Heart left ventricle (tissue), 16 donors: ENCODE measurements at regions of chr20 and their contacts with region 1.

Region 1: GRCh38 chr20:34302723-34303528 is at the start of gene AHCY:
- DNase-seq: peak; percentile 95 to 98 (median 97)
- ATAC-seq: peak; percentile 92 to 98 (median 97)
- H3K4me3 ChIP-seq: peak within 1 kb of the TSS; percentile 58 to 95 (median 74)
- H3K27ac ChIP-seq: peak within 1 kb of the TSS; percentile 70 to 98 (median 92)
- H3K4me1 ChIP-seq: peaks cover 0 to 34% (median 16%) of the 10 kb centered on the region in 12 donors
- H3K27me3 ChIP-seq: no peaks in the 10 kb centered on the region
- CTCF ChIP-seq: peak in 2 of 12 donors; percentile 12 to 19
- POLR2A ChIP-seq: peak in 1 of 2 donors; percentile 77
- total RNA-seq, gene AHCY: 48.3 to 132 (median 57.2) TPM

Region 2: DNA sequence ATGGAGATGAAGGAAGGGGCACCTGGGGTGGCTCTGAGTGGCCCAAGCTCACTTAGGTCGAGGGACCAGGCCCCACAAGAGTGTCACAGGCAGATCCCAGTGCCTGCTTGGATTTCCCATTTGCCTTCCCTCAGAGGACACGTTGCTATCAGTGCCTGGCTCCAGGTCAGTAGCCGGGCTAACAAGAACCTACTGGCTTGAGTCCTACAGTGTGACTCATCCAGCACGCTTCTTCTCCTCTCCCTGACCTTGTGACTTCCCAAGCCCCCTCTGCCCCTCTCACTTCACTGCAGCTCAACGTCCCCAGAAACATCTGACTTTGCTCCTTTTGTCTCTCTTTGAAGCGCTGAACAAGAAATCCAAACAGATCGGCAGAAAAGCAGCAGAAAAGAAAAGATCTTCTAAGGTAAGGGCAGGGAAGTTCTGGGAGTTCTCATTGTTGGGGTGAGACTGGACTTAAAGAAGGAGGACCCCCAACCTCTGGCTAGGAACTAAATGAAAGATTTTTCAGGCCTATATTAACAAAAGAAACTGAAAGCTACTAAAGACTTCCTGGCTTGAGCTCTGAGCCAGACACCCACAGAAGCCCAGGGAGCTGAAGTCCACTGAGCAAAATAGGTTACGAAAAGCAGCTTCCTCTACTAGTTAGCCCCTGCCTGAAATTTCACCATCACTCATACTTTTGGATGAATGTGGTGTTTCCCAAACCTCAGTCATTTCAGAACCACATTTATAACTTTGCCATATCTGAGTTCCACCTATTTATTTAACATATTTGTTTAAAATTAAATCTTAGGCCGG is 40.2 kb before region 1 on chr20:
- intact Hi-C with region 1: loop called in 1 of 10 experiments (anchors 5 kb)
- DNase-seq: peak in 4 of 5 donors; percentile 57 to 82 (median 70)
- ATAC-seq: peak; percentile 92 to 96 (median 95)
- H3K4me3 ChIP-seq: peak overlapping the region in 7 of 12 donors; percentile 13 to 36 (median 26)
- H3K27ac ChIP-seq: peak overlapping the region; percentile 63 to 93 (median 77)
- H3K4me1 ChIP-seq: peaks cover 0 to 16% (median 12%) of the 10 kb centered on the region in 12 donors
- H3K27me3 ChIP-seq: no peaks in the 10 kb centered on the region
- CTCF ChIP-seq: no peak
- POLR2A ChIP-seq: no peak

Region 3: GRCh38 chr20:34285450-34285849 is 17.5 kb before region 1 on chr20:
- intact Hi-C with region 1: no loop called
- DNase-seq: no peak
- ATAC-seq: no peak
- H3K4me3 ChIP-seq: no peak overlapping the region
- H3K27ac ChIP-seq: no peak overlapping the region
- H3K4me1 ChIP-seq: no peaks in the 10 kb centered on the region
- H3K27me3 ChIP-seq: no peaks in the 10 kb centered on the region
- CTCF ChIP-seq: no peak
- POLR2A ChIP-seq: no peak

Region 4: DNA sequence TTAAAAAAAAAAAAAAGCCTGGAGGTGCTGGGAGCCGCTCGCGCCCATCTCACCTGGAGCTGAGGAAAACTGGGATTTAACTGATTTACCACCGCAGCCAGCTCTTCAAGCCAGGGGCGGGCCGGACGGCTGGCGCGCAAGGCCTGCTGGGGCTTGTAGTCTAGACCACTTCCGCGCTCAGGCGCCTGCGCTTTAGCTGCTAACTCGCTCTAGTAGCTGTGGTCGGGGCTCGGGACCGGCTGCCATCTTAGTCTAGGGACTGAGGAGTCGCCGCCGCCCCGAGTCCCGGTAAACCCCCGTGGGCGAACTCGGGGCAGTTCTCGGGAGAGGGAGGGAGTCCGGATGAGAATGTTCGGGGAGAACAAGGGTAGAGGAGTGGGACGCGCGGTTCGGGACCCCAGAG is 60.1 kb after region 1 on chr20 and contains the start of gene ITCH:
- intact Hi-C with region 1: loop called in 1 of 10 experiments (anchors 5 kb)
- DNase-seq: peak; percentile 95 to 98 (median 97)
- ATAC-seq: peak; percentile 100
- H3K4me3 ChIP-seq: peak within 1 kb of the TSS; percentile 77 to 99 (median 94)
- H3K27ac ChIP-seq: peak within 1 kb of the TSS; percentile 89 to 98 (median 94)
- H3K4me1 ChIP-seq: peaks cover 2 to 47% (median 32%) of the 10 kb centered on the region in 12 donors
- H3K27me3 ChIP-seq: no peaks in the 10 kb centered on the region
- CTCF ChIP-seq: peak in 1 of 12 donors; percentile 6
- POLR2A ChIP-seq: peak; percentile 69 to 92
- total RNA-seq, gene ITCH: 36.4 to 49.0 (median 40.3) TPM

Region 5: DNA sequence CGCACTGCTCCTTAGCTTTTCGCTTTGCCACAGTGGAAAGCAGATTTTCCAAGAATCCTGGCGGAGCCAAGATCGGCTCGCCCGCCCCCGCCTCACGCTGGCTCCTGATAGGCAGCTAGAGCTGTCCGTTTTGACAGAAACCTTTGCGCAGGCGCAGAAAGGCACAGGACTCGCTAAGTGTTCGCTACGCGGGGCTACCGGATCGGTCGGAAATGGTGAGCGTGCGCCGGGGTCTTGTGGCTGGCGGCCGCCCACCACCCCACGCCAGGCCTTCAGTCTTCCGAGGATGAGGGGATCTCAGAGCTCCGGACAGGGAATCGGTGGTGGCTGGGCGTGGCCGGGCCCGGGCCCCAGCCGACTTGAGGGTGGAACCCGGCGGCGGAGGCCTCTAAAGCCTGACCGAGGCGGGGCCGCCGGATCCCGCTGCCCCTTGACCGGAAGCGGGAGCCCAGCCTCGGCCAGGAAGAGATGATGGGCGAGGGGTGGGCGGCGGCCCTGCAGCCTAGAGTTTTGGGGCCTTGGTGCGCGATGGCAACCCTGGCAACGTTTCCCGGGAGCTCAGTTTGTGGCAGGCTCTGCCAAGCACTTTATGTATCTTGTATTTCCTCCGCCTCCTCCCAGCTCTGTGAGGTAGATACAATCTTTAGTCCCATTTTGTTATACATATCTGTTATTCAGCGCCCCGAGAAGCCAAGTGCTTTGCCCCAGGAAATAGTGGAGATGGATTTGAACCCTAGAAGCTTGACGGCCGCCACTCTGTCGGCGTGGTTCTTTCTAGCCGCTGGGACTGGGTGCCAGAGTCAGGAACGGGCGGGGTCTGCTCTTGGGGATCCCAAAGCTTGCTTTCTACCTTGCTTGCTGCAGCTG is 213.6 kb after region 1 on chr20 and contains the start of gene DYNLRB1:
- intact Hi-C with region 1: loop called in 1 of 10 experiments (anchors 2 kb)
- DNase-seq: peak; percentile 97 to 98 (median 98)
- ATAC-seq: peak; percentile 96 to 98 (median 97)
- H3K4me3 ChIP-seq: peak within 1 kb of the TSS; percentile 56 to 95 (median 80)
- H3K27ac ChIP-seq: peak within 1 kb of the TSS; percentile 89 to 99 (median 95)
- H3K4me1 ChIP-seq: peaks cover 0 to 49% (median 31%) of the 10 kb centered on the region in 12 donors
- H3K27me3 ChIP-seq: no peaks in the 10 kb centered on the region
- CTCF ChIP-seq: no peak
- POLR2A ChIP-seq: peak in 1 of 2 donors; percentile 86
- total RNA-seq, gene DYNLRB1: 129 to 376 (median 145) TPM